Activated CD8-positive, alpha-beta T cell treated with anti-CD3 and anti-CD28 coated beads for 36 hours (primary cell): ENCODE measurements at regions of chr16 and their contacts with region 1.

Region 1: GRCh38 chr16:87765776-87766484 is at the start of gene KLHDC4:
- DNase-seq: peak; percentile 94
- ATAC-seq: peak; percentile 72
- H3K4me3 Mint-ChIP-seq: peak within 1 kb of the TSS; percentile 86
- H3K27ac Mint-ChIP-seq: peak within 1 kb of the TSS; percentile 94
- H3K4me1 Mint-ChIP-seq: peaks cover 31% of the 10 kb centered on the region
- H3K27me3 Mint-ChIP-seq: no peaks in the 10 kb centered on the region
- CTCF ChIP-seq: no peak
- total RNA-seq, gene KLHDC4: 80.8 to 81.7 TPM

Region 2: DNA sequence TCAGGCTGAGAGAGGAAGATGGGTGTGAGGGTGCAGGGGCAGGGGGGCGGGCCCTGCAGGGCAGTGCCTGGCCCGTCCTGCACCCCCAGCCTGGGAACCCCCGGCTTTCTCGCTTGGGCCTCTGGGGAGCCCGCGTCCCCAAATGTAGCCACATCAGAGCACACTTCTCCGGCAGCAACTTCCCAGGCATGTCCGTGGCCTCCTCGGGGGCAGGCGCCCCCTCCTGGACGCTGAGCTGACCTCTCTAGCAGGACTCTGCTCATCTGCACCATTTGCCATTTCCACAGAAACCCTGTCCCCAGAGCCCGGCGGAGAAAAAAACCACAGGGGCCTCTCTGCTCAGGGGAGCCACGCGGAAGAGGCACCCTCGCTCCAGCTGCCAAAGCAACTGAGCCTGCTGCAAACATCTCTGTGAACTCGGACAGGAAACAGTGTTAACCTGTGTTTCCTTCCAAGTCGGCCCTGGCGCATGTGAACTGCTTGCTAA is 63.6 kb before region 1 on chr16:
- CTCF ChIA-PET with region 1: interaction called, 13 read pairs
- POLR2A ChIA-PET with region 1: no interaction called
- intact Hi-C with region 1: no loop called
- DNase-seq: peak; percentile 70
- ATAC-seq: peak; percentile 74
- H3K4me3 Mint-ChIP-seq: no peak overlapping the region
- H3K27ac Mint-ChIP-seq: peak overlapping the region; percentile 64
- H3K4me1 Mint-ChIP-seq: peaks cover 43% of the 10 kb centered on the region
- H3K27me3 Mint-ChIP-seq: no peaks in the 10 kb centered on the region
- CTCF ChIP-seq: peak; percentile 35

Region 3: DNA sequence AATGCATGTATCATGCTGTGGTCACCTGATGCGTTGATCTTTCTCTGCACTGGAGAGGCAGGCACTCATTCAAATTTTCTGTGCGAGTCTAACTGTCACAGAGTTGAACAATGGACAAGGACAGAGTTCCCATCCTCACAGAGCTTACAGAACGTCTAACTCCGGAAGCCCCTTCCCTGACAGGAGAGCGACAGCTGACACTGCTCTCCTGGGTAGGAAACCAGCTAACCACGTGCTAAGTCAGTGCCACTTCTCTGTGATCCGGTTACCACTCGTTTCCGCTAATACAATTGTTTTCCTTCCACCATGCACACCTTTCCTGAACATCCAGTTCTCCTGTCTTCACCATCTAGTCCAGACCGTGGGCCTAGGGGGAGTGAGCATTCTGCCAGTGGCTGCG is 11.4 kb before region 1 on chr16:
- CTCF ChIA-PET with region 1: interaction called, 11 read pairs
- POLR2A ChIA-PET with region 1: interaction called, 6 read pairs
- intact Hi-C with region 1: no loop called
- DNase-seq: no peak
- ATAC-seq: no peak
- H3K4me3 Mint-ChIP-seq: no peak overlapping the region
- H3K27ac Mint-ChIP-seq: peak overlapping the region; percentile 15
- H3K4me1 Mint-ChIP-seq: peaks cover 7% of the 10 kb centered on the region
- H3K27me3 Mint-ChIP-seq: no peaks in the 10 kb centered on the region
- CTCF ChIP-seq: no peak

Region 4: GRCh38 chr16:87877938-87878507 is 112.1 kb after region 1 on chr16:
- CTCF ChIA-PET with region 1: interaction called, 10 read pairs
- POLR2A ChIA-PET with region 1: interaction called, 7 read pairs
- intact Hi-C with region 1: no loop called
- DNase-seq: peak; percentile 71
- ATAC-seq: peak; percentile 17
- H3K4me3 Mint-ChIP-seq: no peak overlapping the region
- H3K27ac Mint-ChIP-seq: no peak overlapping the region
- H3K4me1 Mint-ChIP-seq: peaks cover 50% of the 10 kb centered on the region
- H3K27me3 Mint-ChIP-seq: peaks cover 4% of the 10 kb centered on the region
- CTCF ChIP-seq: peak; percentile 55